ENCODE measurements at regions of chr5 and their contacts with region 1.

Region 1: DNA sequence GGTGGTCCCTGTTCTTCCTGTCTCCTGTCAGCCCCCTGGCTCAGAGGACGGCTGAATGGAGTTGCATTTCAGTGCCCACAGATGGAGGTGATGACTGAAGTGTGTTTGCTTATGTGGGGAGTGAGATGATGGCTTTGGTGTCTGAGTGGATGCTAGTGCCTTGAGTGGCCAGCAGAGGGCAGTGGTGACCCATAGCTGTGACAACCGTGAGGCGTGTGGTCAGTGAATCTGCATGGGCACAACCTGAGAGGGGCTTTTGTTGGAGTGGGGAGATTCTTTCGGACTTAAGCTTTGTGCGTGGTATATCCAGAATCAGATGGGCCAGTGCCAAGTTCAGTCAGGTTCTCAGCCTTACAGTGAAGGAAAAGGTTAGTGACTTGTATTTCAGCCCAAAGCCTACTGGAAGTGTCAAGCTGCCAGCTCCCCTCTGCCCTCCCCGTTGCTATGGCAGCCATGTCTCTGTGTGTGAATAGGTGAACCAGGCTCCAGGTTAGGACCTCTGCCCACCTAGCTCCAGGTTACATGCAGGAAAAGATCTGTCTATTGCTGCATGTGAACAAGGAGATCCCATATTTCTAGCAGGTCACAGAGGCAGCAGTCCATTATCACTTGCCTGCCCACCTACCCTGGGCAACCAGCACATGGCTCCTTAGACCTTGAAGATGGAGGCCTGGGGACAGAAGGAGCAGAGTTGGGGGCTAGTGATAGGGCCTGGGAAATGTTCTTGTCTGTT is 14.7 kb upstream of the CXXC5 start:
- DNase-seq: peak; percentile 92
- H3K4me3 ChIP-seq: no peak overlapping the region
- H3K27ac ChIP-seq: no peak overlapping the region
- H3K4me1 ChIP-seq: peaks cover 30 to 48% (median 47%) of the 10 kb centered on the region in 4 donors
- H3K27me3 ChIP-seq: no peaks in the 10 kb centered on the region
- CTCF ChIP-seq: peak; percentile 94 to 99 (median 97)
- EP300 ChIP-seq: no peak
- POLR2A ChIP-seq: no peak

Region 2: GRCh38 chr5:139690064-139690802 is 56.8 kb after region 1 on chr5:
- intact Hi-C with region 1: loop called (anchors 5 kb)
- DNase-seq: no peak
- H3K4me3 ChIP-seq: no peak overlapping the region
- H3K27ac ChIP-seq: peak overlapping the region in 2 of 4 donors; percentile 18
- H3K4me1 ChIP-seq: peaks cover 33 to 63% (median 47%) of the 10 kb centered on the region in 4 donors
- H3K27me3 ChIP-seq: no peaks in the 10 kb centered on the region
- CTCF ChIP-seq: peak; percentile 51 to 74 (median 69)
- EP300 ChIP-seq: no peak
- POLR2A ChIP-seq: no peak

Region 3: DNA sequence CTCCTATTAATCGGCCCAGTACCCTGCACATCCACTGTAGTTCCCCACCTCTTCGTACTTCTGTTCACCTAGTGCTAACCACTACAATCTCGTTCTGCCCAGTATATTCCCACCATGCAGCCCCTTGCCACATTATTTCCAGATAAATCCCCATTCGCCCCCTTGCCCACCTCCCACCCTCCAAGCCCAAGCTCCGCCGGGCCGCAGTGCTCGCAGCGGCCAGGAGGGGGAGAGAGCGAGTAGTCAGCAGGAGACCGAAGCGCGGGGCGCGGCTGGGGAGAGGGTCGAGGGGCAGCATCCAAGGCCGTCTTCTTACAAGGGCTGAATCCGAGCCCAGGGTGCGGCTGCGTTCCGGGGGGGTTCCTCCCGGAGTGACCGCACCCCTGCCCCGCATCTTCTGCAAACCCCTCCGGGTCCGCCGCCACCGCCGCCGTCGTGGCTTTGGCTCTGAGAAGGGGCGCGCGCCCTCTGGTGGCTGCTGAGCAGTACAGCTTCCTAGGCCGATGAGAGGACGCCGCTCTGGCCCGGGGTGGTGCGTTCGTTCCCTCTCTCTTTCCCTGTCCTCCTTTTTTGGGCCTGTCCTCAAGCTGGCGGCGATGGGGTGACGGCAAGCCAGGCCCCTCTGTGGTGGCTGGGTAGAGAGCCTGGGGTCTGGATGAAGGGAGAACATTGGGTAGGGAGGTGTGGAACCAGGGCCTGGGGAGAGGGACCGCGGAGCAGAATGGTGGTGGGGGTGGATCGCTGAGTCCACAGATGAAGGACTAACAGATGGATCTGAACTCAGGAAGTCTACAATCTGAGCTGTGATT is 132.2 kb after region 1 on chr5:
- intact Hi-C with region 1: loop called (anchors 1 kb)
- DNase-seq: no peak
- H3K4me3 ChIP-seq: peak overlapping the region; percentile 54 to 79 (median 57)
- H3K27ac ChIP-seq: peak overlapping the region in 1 of 4 donors; percentile 48
- H3K4me1 ChIP-seq: peaks cover 13 to 31% (median 22%) of the 10 kb centered on the region in 4 donors
- H3K27me3 ChIP-seq: peaks cover 0 to 30% (median 14%) of the 10 kb centered on the region in 4 donors
- CTCF ChIP-seq: peak; percentile 85 to 98 (median 96)
- EP300 ChIP-seq: no peak
- POLR2A ChIP-seq: no peak